ENCODE measurements at regions of chr15 and their contacts with region 1.

Region 1: GRCh38 chr15:100873029-100873677 is 6.5 kb upstream of the ALDH1A3 start:
- DNase-seq: peak in 7 of 9 experiments; percentile 25 to 74 (median 51)
- ATAC-seq: peak; percentile 70
- H3K4me3 ChIP-seq: no peak overlapping the region
- H3K4me3 Mint-ChIP-seq: no peak overlapping the region
- H3K27ac ChIP-seq: no peak overlapping the region
- H3K27ac Mint-ChIP-seq: no peak overlapping the region
- H3K4me1 ChIP-seq: no peaks in the 10 kb centered on the region
- H3K4me1 Mint-ChIP-seq: no peaks in the 10 kb centered on the region
- H3K27me3 ChIP-seq: no peaks in the 10 kb centered on the region
- H3K27me3 Mint-ChIP-seq: peaks cover 27% of the 10 kb centered on the region
- CTCF ChIP-seq: peak; percentile 73

Region 2: GRCh38 chr15:100627789-100628395 is 245.3 kb before region 1 on chr15:
- CTCF ChIA-PET with region 1: interaction called, 14 read pairs
- POLR2A ChIA-PET with region 1: no interaction called
- intact Hi-C with region 1: loop called in 1 of 2 experiments (anchors 1 kb)
- DNase-seq: peak; percentile 27 to 81 (median 65)
- ATAC-seq: peak; percentile 96
- H3K4me3 ChIP-seq: no peak overlapping the region
- H3K4me3 Mint-ChIP-seq: no peak overlapping the region
- H3K27ac ChIP-seq: no peak overlapping the region
- H3K27ac Mint-ChIP-seq: no peak overlapping the region
- H3K4me1 ChIP-seq: no peaks in the 10 kb centered on the region
- H3K4me1 Mint-ChIP-seq: peaks cover 31% of the 10 kb centered on the region
- H3K27me3 ChIP-seq: no peaks in the 10 kb centered on the region
- H3K27me3 Mint-ChIP-seq: no peaks in the 10 kb centered on the region
- CTCF ChIP-seq: peak; percentile 81

Region 3: DNA sequence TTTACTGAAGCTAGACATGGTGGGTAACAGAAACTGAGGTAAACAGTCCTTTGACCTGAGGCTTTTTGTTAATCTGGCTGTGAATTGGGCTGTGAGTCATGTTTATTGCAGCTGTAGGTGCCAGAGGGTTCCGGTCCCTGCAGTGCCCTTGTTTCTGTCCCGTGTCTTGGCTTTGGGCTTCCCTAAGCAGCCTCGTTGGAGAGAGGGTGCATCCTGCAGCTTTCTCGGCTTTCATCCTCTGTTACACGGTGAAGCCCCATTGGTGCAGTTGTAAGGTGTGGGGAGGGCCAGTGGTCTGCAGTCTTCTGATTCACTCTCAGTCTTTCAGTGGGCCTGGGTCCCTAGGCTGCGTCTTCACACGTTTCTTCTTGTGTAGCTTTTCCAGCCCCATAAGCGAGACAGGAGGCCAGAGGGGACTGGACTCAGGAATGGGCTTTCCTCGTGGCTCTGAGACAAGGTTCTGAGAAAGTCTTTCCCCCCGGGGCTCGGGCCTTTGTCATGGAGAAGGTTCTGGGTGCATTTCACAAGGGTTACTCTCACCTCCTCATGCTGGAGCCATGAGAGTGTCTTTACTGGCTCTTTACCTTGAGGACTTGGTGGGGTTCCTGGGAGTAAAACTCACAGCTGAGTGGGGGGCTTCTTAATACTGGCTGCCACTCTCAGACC is 237.6 kb before region 1 on chr15:
- CTCF ChIA-PET with region 1: interaction called, 11 read pairs
- POLR2A ChIA-PET with region 1: no interaction called
- intact Hi-C with region 1: no loop called
- DNase-seq: no peak
- ATAC-seq: no peak
- H3K4me3 ChIP-seq: no peak overlapping the region
- H3K4me3 Mint-ChIP-seq: no peak overlapping the region
- H3K27ac ChIP-seq: no peak overlapping the region
- H3K27ac Mint-ChIP-seq: no peak overlapping the region
- H3K4me1 ChIP-seq: peaks cover 18% of the 10 kb centered on the region
- H3K4me1 Mint-ChIP-seq: peaks cover 74% of the 10 kb centered on the region
- H3K27me3 ChIP-seq: no peaks in the 10 kb centered on the region
- H3K27me3 Mint-ChIP-seq: no peaks in the 10 kb centered on the region
- CTCF ChIP-seq: no peak